ENCODE measurements at regions of chr2 and their contacts with region 1.

Region 1: DNA sequence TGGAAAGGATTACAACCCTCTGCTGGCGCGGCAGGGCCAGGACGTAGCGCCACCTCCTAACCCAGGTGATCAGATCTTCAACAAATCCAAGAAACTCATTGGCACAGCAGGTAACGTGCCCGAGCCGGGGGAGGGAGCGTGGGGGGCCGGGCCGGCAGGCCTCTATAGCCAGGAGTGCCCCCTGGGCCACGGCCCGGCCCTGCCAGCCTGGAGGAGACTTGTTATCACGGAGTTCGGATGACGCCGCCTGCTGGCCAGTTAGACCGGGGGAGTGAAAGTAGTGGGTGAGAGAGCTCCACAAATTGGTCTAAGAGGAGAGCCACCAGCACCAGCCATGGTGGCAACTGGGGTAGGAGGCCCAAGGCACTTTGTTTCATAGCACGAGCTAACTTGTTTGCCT is 8.6 kb upstream of the TMEM214 start:
- DNase-seq: peak; percentile 87
- ATAC-seq: peak; percentile 83
- H3K4me3 Mint-ChIP-seq: no peak overlapping the region
- H3K27ac Mint-ChIP-seq: no peak overlapping the region
- H3K4me1 Mint-ChIP-seq: peaks cover 6% of the 10 kb centered on the region
- H3K27me3 Mint-ChIP-seq: no peaks in the 10 kb centered on the region
- CTCF ChIP-seq: peak; percentile 44; the same call in 1 of the 2 replicates

Region 2: GRCh38 chr2:26846328-26847306 is 177.6 kb before region 1 on chr2:
- CTCF ChIA-PET with region 1: interaction called, 155 read pairs
- POLR2A ChIA-PET with region 1: interaction called, 3 read pairs
- DNase-seq: peak; percentile 76
- ATAC-seq: peak; percentile 33
- H3K4me3 Mint-ChIP-seq: peak overlapping the region; percentile 79
- H3K27ac Mint-ChIP-seq: no peak overlapping the region
- H3K4me1 Mint-ChIP-seq: peaks cover 9% of the 10 kb centered on the region
- H3K27me3 Mint-ChIP-seq: peaks cover 68% of the 10 kb centered on the region
- CTCF ChIP-seq: peak; percentile 53

Region 3: GRCh38 chr2:26861610-26862224 is 162.5 kb before region 1 on chr2:
- CTCF ChIA-PET with region 1: no interaction called
- POLR2A ChIA-PET with region 1: no interaction called
- DNase-seq: no peak
- ATAC-seq: no peak
- H3K4me3 Mint-ChIP-seq: no peak overlapping the region
- H3K27ac Mint-ChIP-seq: no peak overlapping the region
- H3K4me1 Mint-ChIP-seq: no peaks in the 10 kb centered on the region
- H3K27me3 Mint-ChIP-seq: peaks cover 11% of the 10 kb centered on the region
- CTCF ChIP-seq: no peak

Region 4: DNA sequence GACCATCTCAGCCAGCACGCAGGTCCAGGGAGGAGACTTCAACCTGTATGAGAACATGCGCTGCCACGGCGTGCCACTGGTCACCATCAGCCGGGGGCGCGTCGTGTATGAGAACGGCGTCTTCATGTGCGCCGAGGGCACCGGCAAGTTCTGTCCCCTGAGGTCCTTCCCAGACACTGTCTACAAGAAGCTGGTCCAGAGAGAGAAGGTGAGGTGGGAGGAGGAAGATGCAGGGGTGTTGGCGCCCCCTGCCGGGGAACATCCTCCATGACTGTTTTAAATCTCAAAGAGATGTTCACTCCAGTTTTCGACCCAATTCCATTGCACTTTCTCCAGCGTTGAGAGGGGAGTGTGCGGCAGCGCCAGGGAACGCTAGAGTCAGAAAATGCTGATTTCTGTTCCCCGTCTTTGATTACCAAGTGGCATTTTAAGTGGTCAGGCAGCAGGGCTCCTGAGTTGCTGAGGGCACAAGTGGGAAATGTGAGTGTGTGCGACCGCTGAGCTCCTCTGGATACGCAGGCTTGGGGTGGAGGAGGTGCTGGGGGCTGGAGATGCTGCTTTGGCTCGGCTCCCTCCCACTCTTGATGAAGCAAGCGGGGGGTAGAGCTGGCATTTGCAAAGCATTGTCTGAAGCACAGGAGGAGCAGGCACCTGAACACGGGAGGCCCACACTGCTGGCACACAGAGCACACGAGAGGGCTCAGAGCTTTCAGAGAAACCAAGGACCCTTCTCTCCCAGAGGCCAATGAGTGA is 81.5 kb before region 1 on chr2:
- CTCF ChIA-PET with region 1: interaction called, 21 read pairs
- POLR2A ChIA-PET with region 1: no interaction called
- DNase-seq: peak; percentile 87
- ATAC-seq: peak; percentile 78
- H3K4me3 Mint-ChIP-seq: peak overlapping the region; percentile 86
- H3K27ac Mint-ChIP-seq: no peak overlapping the region
- H3K4me1 Mint-ChIP-seq: peaks cover 16% of the 10 kb centered on the region
- H3K27me3 Mint-ChIP-seq: peaks cover 29% of the 10 kb centered on the region
- CTCF ChIP-seq: peak; percentile 96

Region 5: DNA sequence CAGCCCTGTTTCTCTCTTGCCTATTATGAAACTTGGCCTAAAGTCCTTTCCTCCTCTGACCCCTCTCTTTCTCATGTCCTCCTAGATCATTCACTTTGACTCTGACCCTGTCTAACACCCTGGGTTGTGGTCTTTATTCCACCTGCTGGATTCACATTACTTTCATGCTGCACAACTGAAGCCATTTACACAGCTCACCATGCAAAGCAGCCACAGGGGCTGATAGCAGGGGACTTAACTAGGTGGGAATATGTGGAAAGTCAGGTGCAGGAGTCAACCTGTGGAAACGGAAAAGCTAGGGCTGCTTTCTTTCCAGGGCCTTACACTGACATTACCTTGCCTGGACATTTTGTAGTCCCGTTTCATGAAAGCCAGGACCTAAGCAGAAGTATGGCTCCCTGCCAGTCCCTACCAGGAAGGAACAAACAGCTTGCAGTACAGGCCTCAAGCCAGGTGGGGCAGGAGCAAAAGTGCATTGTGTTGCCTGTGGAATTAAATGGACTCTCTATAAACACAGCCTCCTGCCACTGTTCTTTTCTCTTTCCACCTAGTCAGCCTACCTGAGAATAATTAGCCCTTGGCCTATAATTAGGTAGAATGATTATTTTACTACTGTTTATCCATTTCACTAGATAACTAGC is 42.0 kb before region 1 on chr2:
- CTCF ChIA-PET with region 1: interaction called, 12 read pairs
- POLR2A ChIA-PET with region 1: no interaction called
- DNase-seq: peak; percentile 30
- ATAC-seq: peak; percentile 96
- H3K4me3 Mint-ChIP-seq: no peak overlapping the region
- H3K27ac Mint-ChIP-seq: no peak overlapping the region
- H3K4me1 Mint-ChIP-seq: no peaks in the 10 kb centered on the region
- H3K27me3 Mint-ChIP-seq: no peaks in the 10 kb centered on the region
- CTCF ChIP-seq: no peak

Region 6: DNA sequence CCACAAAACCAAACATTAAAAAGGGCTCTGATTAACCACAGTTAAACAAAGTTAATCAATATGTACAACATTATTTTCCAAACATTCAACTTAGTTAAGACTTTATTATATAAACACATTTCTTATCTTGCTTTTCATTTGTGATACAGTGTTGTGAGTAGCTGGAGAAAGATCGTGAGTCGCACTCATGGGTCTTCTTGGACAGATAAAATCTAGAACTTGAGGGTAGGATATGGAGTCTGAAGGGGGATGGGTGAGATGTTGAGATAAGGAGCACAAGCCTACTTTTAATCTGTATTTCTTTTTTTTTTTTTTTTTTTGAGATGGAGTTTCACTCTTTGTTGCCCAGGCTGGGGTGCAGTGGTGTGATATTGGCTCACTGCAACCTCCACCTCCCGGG is 14.0 kb before region 1 on chr2:
- CTCF ChIA-PET with region 1: interaction called, 47 read pairs
- POLR2A ChIA-PET with region 1: no interaction called
- DNase-seq: no peak
- ATAC-seq: no peak
- H3K4me3 Mint-ChIP-seq: no peak overlapping the region
- H3K27ac Mint-ChIP-seq: no peak overlapping the region
- H3K4me1 Mint-ChIP-seq: no peaks in the 10 kb centered on the region
- H3K27me3 Mint-ChIP-seq: peaks cover 11% of the 10 kb centered on the region; the same call in 1 of the 2 replicates
- CTCF ChIP-seq: no peak

Region 7: GRCh38 chr2:27050281-27050995 is 26.2 kb after region 1 on chr2:
- CTCF ChIA-PET with region 1: interaction called, 38 read pairs
- POLR2A ChIA-PET with region 1: no interaction called
- DNase-seq: peak; percentile 95
- ATAC-seq: peak; percentile 84
- H3K4me3 Mint-ChIP-seq: peak overlapping the region; percentile 93
- H3K27ac Mint-ChIP-seq: peak overlapping the region; percentile 98
- H3K4me1 Mint-ChIP-seq: peaks cover 12% of the 10 kb centered on the region
- H3K27me3 Mint-ChIP-seq: peaks cover 10% of the 10 kb centered on the region
- CTCF ChIP-seq: no peak

Region 8: GRCh38 chr2:27086090-27086723 is 62.0 kb after region 1 on chr2:
- CTCF ChIA-PET with region 1: interaction called, 14 read pairs
- POLR2A ChIA-PET with region 1: no interaction called
- DNase-seq: peak; percentile 97
- ATAC-seq: peak; percentile 81
- H3K4me3 Mint-ChIP-seq: peak overlapping the region; percentile 70
- H3K27ac Mint-ChIP-seq: no peak overlapping the region
- H3K4me1 Mint-ChIP-seq: peaks cover 21% of the 10 kb centered on the region
- H3K27me3 Mint-ChIP-seq: peaks cover 23% of the 10 kb centered on the region
- CTCF ChIP-seq: peak; percentile 98